Motor neuron (in vitro differentiated cells): ENCODE measurements at regions of chr2 and their contacts with region 1.

Region 1: GRCh38 chr2:112726497-112727190 is 5.8 kb downstream of the NT5DC4 start:
- ATAC-seq: peak; percentile 94 to 99 (median 97)
- H3K4me3 ChIP-seq: no peak overlapping the region
- H3K27ac ChIP-seq: no peak overlapping the region
- H3K4me1 ChIP-seq: peaks cover 0 to 3% of the 10 kb centered on the region in 2 donors

Region 2: GRCh38 chr2:111123751-111124150 is 1602.9 kb before region 1 on chr2:
- in situ Hi-C with region 1: no loop called
- ATAC-seq: no peak
- H3K4me3 ChIP-seq: peak overlapping the region; percentile 57 to 86 (median 64)
- H3K27ac ChIP-seq: no peak overlapping the region
- H3K4me1 ChIP-seq: peaks cover 2 to 6% of the 10 kb centered on the region in 2 donors

Region 3: DNA sequence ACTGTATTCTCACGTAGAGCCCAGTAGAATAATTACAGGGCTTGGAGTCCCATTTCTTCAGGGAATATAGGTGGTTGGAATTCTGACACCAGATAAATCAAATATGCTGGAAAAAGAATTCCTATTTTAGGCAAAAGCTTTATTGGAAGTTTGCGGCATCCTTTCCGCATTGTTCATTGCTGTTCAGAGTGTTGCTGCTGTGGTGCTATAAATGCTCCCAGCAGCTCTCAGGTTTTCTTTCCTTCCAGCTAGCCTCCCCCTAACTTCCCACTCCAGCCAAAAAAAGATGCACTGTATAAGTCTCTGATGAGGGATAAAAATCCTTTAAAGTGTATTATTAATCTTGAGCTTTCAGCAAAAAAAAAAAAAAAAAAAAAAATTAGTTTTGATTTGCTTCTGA is 209.8 kb before region 1 on chr2:
- in situ Hi-C with region 1: no loop called
- ATAC-seq: no peak
- H3K4me3 ChIP-seq: no peak overlapping the region
- H3K27ac ChIP-seq: no peak overlapping the region
- H3K4me1 ChIP-seq: no peaks in the 10 kb centered on the region

Region 4: GRCh38 chr2:112606488-112606902 is 120.1 kb before region 1 on chr2:
- in situ Hi-C with region 1: loop called in 4 of 9 experiments (anchors 10 to 25 kb)
- ATAC-seq: no peak
- H3K4me3 ChIP-seq: no peak overlapping the region
- H3K27ac ChIP-seq: no peak overlapping the region
- H3K4me1 ChIP-seq: no peaks in the 10 kb centered on the region

Region 5: DNA sequence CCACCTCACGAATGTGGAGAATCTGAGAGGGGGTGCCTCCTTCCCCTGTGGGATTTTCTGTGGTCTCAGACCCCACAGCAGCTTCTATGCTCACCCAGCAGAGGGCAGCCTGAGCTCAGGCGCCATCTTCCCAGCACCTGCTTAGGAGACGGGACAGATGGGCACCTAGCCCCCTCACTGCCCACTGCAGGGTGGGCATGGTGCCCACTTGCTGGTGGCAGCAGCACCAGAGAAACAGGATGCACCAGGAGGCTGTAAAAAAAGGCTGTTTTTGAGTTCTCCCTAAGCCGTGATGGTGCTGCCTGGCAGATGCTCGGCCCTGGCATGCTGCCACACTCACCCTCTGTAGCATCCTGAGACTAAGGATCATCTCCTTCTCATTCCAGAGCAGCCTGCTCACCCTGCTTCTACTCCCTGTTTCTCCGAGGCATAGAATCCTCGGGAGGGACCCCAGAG is 100.0 kb before region 1 on chr2:
- in situ Hi-C with region 1: loop called in 5 of 9 experiments (anchors 10 to 25 kb)
- ATAC-seq: peak; percentile 3 to 84 (median 69)
- H3K4me3 ChIP-seq: no peak overlapping the region
- H3K27ac ChIP-seq: no peak overlapping the region
- H3K4me1 ChIP-seq: peaks cover 3 to 6% of the 10 kb centered on the region in 2 donors

Region 6: DNA sequence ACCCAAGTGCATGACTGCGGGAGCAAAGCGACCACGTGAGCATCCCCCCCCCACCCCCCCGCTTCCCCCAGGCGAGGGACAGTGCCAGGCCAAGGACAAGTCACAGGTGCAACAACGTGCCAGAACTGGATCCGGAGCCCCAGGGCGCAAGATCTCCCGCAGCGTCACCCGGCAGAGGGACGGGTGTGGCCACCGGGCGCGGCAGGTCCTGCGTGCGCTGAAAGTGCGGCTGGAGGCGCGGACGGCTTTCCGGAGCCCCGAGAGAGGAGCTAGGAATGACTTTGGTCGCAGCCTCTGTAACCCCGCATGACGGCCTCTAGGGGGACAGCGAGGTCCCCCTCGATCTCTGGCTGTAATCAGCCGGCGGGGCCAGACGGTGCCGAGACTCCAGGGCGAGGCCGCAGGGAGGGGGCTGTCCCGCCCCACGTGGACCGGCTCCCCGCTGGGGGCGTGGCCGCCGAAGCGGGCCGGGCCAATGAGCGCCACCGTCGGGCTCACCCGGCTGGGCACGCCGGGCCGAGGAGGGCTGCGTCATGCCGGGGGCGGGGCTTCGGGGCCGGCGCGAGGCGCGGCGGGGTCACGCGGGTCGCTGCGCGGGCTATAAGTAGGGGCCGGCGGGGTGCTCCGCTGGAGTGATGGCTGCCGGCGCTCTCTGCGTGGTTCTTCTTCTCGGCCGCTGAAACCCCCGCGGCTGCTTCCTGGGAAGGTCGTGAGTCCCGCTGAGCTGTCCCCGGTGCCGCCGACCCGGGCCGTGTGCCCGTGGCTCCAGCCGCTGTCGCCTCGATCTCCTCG is 81.1 kb before region 1 on chr2 and contains the start of gene SLC20A1:
- in situ Hi-C with region 1: loop called in 1 of 9 experiments (anchors 25 kb)
- ATAC-seq: peak; percentile 79 to 93 (median 92)
- H3K4me3 ChIP-seq: peak within 1 kb of the TSS; percentile 69 to 90 (median 78)
- H3K27ac ChIP-seq: peak within 1 kb of the TSS; percentile 83 to 88
- H3K4me1 ChIP-seq: peaks cover 14 to 15% of the 10 kb centered on the region in 2 donors
- total RNA-seq, gene SLC20A1: 31.4 to 62.2 (median 47.6) TPM

Region 7: GRCh38 chr2:112884869-112885505 is 158.3 kb after region 1 on chr2:
- in situ Hi-C with region 1: loop called in 1 of 9 experiments (anchors 25 kb)
- ATAC-seq: peak in 3 of 8 experiments; percentile 42 to 75 (median 71)
- H3K4me3 ChIP-seq: no peak overlapping the region
- H3K27ac ChIP-seq: no peak overlapping the region
- H3K4me1 ChIP-seq: no peaks in the 10 kb centered on the region